ENCODE measurements at regions of chr13 and their contacts with region 1.

Region 1: DNA sequence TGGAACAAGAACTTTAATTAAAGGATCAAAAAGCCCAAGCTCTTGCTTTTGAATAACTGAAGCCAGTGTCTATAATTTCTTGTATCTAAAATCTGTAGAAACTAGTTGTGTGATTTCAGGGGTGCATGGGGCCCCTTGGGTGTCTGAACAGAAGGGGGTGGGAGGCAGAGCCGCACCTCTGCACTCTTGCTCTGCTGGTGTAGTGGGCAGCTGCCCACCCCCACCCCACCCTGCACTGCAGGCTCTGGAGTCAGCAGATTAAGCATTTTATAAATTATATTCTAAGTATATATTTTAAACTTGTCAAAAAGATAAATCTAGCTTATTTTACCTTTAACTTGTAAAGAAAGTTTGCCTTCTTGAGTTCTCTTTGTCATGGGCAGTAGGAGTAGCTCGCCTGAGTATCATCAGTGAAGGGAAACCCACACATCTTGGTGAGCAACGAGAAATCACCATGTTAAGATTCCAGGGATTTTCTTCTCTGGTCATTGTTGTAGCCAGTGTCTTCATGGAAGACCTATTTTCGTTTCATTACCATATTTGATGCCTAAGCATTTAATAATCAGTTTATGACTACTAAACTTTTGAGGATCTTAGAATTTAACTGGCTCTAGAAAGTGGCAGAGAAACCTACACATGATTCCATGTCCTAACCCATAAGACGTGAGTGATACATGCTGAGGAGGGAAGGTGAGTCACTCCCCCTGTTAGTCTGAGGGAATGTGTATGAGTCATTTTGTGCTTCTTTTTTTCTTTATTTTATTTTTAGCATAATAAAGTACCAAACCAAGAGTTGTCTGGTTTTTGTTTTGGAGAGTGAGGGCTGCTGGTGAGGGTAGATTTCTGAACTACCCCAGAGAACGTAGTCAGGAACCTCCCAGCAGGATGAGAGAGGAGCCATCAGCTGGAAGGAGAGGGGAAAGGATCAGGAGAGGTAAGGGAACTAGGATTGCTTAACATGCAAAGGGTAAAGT is 7.7 kb downstream of the UBE2L5 start:
- DNase-seq: no peak
- H3K4me3 Mint-ChIP-seq: peak overlapping the region; percentile 59
- H3K27ac Mint-ChIP-seq: peak overlapping the region; percentile 89
- H3K4me1 Mint-ChIP-seq: peaks cover 28% of the 10 kb centered on the region
- H3K27me3 Mint-ChIP-seq: no peaks in the 10 kb centered on the region

Region 2: DNA sequence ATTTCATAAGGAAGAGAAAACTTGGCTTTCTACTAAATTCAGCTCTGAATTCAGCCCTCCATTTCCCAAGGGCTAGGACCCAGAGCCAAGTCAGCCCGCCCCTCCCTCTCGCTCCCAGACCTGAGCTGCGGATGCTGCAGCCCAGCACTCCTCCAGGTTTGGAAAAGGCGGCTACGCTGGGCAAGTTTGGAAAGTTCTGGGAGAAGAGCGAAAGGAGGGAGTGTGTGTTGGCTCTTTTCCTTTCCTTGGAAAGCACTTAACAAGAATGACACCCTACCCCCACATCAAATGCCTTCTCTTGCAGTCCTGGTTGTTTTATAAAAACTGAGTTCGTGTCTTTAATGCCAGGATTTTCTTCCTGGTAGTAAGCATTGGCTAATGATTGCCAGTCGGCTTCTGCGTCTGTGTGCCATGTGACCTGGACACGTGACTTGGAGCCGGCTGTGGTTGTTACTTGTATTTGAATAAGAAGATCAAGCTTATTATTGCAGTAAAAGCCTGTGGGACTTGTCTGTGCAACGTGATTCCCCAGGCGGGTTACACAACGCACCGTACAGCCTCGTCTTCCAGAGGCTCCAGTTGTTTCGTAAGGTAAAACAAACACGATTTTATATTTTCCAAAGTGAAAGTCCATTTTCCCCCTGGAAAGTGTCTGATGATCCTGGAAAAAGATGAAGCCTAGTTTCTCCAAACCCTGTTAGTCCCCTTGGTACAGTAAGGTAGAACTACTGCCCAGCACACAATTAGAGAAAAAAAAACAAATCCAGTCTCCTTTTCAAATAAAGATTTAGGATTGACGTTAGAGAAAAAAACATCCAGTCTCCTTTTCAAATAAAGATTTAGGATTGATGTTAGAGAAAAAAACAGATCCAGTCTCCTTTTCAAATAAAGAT is 34.6 kb before region 1 on chr13:
- intact Hi-C with region 1: loop called (anchors 2 kb)
- DNase-seq: peak; percentile 67
- H3K4me3 Mint-ChIP-seq: peak overlapping the region; percentile 82
- H3K27ac Mint-ChIP-seq: peak overlapping the region; percentile 93
- H3K4me1 Mint-ChIP-seq: peaks cover 35% of the 10 kb centered on the region
- H3K27me3 Mint-ChIP-seq: no peaks in the 10 kb centered on the region

Region 3: GRCh38 chr13:30520571-30520970 is 90.6 kb after region 1 on chr13:
- intact Hi-C with region 1: no loop called
- DNase-seq: no peak
- H3K4me3 Mint-ChIP-seq: no peak overlapping the region
- H3K27ac Mint-ChIP-seq: no peak overlapping the region
- H3K4me1 Mint-ChIP-seq: peaks cover 5% of the 10 kb centered on the region
- H3K27me3 Mint-ChIP-seq: peaks cover 21% of the 10 kb centered on the region

Measured in activated T-helper 2 cell treated with anti-CD3 and anti-CD28 coated beads, Interferon-gamma antibody, Interleukin-2, Interleukin-4, amounts not matched to agents 10 μg/mL and 5 μg/mL and 100 μg/mL, durations not matched to agents 14 hours and 24 hours and 36 hours (primary cell).